WTC11 (cell line): ENCODE measurements at regions of chr11 and their contacts with region 1.

Region 1: DNA sequence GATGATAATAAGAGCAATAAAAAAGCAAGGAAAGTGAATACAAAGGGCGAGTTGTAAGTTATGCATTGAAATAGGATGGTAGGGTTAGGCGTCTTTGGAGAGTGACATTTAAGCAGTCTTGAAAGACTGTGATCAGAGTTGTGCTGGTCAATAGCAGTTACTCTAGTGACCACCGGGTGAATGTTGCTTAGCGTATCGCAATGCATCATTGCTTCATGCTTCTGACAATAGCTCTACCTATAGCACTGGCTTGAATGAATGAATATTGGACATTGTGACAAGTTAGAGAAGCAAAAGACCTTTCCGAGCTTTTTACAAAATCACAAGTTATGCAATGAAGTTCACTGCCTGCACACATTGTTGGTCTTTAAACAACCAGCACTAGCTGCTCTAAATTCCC is 7.7 kb upstream of the OR8B12 start:
- DNase-seq: no peak
- ATAC-seq: peak; percentile 91
- H3K4me3 Mint-ChIP-seq: no peak overlapping the region
- H3K27ac Mint-ChIP-seq: no peak overlapping the region
- H3K4me1 Mint-ChIP-seq: no peaks in the 10 kb centered on the region
- H3K27me3 Mint-ChIP-seq: 0 out of 2 replicates have a peak, but pooled peaks cover 4% of the 10 kb centered on the region
- CTCF ChIP-seq: no peak

Region 2: GRCh38 chr11:124536520-124536919 is 14.7 kb before region 1 on chr11:
- CTCF ChIA-PET with region 1: interaction called, 13 read pairs
- POLR2A ChIA-PET with region 1: no interaction called
- DNase-seq: peak; percentile 63
- ATAC-seq: peak; percentile 100
- H3K4me3 Mint-ChIP-seq: no peak overlapping the region
- H3K27ac Mint-ChIP-seq: peak overlapping the region; percentile 64; the same call in 1 of the 2 replicates
- H3K4me1 Mint-ChIP-seq: peaks cover 8% of the 10 kb centered on the region
- H3K27me3 Mint-ChIP-seq: no peaks in the 10 kb centered on the region
- CTCF ChIP-seq: no peak

Region 3: DNA sequence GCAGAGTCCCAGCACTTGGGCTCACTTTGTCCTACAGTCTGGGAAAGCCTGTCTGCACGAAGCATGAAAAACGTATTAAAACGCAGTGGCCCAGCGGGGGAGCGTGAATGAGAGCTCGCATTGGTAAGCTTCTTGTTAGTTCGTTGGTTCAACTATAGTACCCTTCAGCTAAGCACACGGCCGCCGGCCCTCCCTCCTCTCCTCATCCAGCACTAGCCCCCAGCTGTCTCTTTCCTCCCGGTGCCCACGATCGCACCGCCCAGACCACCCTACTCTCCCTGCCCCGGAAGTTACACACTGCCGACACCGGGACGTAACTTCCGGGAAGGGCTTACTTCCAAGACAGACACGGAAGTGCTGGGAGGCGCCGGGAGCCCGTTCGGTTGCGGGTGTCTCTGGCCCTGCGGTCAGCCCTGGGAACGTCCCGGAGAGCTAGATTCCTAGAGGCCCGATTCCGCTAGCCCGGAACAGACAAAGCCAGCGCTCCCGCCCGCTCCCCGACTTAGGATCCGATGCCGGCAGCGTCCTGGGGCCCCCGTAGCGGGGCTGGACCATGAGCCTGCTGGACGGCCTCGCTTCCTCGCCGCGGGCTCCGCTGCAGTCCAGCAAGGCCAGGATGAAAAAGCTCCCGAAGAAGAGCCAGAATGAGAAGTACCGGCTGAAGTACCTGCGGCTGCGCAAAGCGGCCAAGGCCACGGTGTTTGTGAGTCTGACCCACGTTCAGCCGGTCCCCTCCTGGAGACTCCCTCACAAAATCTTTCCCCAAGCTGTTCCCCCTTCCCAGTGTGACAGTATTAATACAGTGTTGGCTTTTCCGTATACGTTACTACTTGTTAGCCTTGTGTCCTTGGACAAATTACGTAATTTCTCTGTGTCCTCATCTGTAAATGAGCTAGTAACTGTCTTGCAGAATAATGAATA is 71.6 kb after region 1 on chr11 and contains the start of gene TBRG1:
- CTCF ChIA-PET with region 1: no interaction called
- POLR2A ChIA-PET with region 1: no interaction called
- DNase-seq: peak; percentile 79
- ATAC-seq: peak; percentile 98
- H3K4me3 Mint-ChIP-seq: peak within 1 kb of the TSS; percentile 97
- H3K27ac Mint-ChIP-seq: peak within 1 kb of the TSS; percentile 90
- H3K4me1 Mint-ChIP-seq: peaks cover 11% of the 10 kb centered on the region
- H3K27me3 Mint-ChIP-seq: peaks cover 14% of the 10 kb centered on the region
- CTCF ChIP-seq: no peak
- total RNA-seq, gene TBRG1: 25.4 to 30.3 TPM (median 30.0 TPM) in 3 replicates